ENCODE measurements at regions of chr6 and their contacts with region 1.

Region 1: GRCh38 chr6:125995972-125996580 is 9.7 kb downstream of the TRMT11 start:
- DNase-seq: peak; percentile 28
- ATAC-seq: peak; percentile 90
- H3K4me3 ChIP-seq: no peak overlapping the region
- H3K27ac ChIP-seq: no peak overlapping the region
- H3K4me1 ChIP-seq: no peaks in the 10 kb centered on the region
- H3K27me3 ChIP-seq: no peaks in the 10 kb centered on the region
- CTCF ChIP-seq: peak; percentile 94 to 96 (median 95)
- EP300 ChIP-seq: no peak
- POLR2A ChIP-seq: no peak
- RAD21 ChIP-seq: peak; percentile 87

Region 2: DNA sequence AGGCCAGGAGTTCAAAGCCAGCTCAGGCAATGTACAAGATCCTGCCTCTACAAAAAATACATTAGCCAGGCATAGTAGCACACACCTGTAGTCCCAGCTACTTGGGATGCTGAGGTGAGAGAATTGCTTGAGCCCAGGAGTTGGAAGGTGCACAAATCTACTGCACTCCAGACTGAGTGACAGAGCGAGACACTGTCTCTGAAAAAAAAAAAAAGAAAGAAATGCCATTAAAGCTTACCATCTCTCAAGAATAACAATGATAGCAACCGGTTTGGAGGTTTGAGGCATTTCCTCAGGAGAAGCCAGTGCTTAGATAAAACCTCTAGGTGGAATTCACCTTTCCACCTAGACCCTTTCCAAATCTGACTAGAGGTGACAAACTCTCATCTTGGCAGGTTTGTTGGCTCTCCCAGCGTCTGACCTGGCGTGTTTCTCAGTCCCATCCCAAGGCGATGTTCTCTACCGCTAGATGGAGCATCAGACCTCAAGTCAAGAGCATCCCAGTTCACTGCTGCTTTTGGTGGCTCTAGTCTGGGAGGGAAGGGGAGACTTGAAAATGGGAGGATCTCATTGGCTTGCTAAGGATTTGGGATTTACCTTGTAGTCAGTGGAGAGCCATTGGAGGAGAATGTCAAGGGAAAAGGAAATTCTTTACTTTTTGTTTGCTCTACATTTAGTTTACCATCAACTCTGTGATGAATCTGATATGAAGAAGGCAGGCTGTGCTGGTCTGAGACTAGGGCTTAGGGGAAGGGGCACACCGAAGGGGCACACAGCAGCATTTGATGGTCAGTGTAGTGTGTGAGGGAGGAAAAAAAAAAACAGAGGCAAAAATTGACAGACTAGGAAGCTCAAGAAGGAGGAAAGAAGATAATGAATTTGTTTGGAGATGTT is 137.4 kb before region 1 on chr6:
- CTCF ChIA-PET with region 1: no interaction called
- POLR2A ChIA-PET with region 1: no interaction called
- RAD21 ChIA-PET with region 1: no interaction called
- SMC1A ChIA-PET with region 1: interaction called, 11 read pairs
- in situ Hi-C with region 1: no loop called
- intact Hi-C with region 1: no loop called
- DNase-seq: no peak
- ATAC-seq: peak; percentile 91
- H3K4me3 ChIP-seq: no peak overlapping the region
- H3K27ac ChIP-seq: no peak overlapping the region
- H3K4me1 ChIP-seq: no peaks in the 10 kb centered on the region
- H3K27me3 ChIP-seq: no peaks in the 10 kb centered on the region
- CTCF ChIP-seq: peak; percentile 60 to 64 (median 62); a peak in 5 of 6 replicates
- EP300 ChIP-seq: no peak
- POLR2A ChIP-seq: no peak
- RAD21 ChIP-seq: peak; percentile 63

Region 3: GRCh38 chr6:125944434-125944816 is 51.7 kb before region 1 on chr6:
- CTCF ChIA-PET with region 1: no interaction called
- POLR2A ChIA-PET with region 1: no interaction called
- RAD21 ChIA-PET with region 1: no interaction called
- SMC1A ChIA-PET with region 1: no interaction called
- in situ Hi-C with region 1: no loop called
- intact Hi-C with region 1: no loop called
- DNase-seq: no peak
- ATAC-seq: no peak
- H3K4me3 ChIP-seq: no peak overlapping the region
- H3K27ac ChIP-seq: no peak overlapping the region
- H3K4me1 ChIP-seq: no peaks in the 10 kb centered on the region
- H3K27me3 ChIP-seq: no peaks in the 10 kb centered on the region
- CTCF ChIP-seq: no peak
- EP300 ChIP-seq: no peak
- POLR2A ChIP-seq: no peak
- RAD21 ChIP-seq: no peak

Region 4: DNA sequence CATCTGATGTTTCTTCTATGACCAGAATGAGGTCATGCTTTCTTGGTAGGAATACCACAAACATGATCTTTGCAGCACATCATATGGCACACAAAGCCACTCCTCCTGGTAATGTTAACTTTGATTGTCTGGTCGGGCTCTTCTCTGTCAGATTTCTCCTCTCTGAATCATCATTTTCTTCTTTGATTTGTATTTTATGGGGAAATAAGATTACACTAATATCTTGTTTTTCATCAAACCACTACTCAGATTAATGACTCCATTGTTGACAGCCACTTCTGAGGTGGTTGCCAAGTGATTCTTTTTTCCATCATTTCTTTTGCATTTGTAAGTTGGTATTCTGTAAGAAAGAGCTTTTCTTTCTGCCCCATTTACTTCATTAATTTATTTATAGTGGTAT is 19.8 kb after region 1 on chr6:
- CTCF ChIA-PET with region 1: interaction called, 32 read pairs
- POLR2A ChIA-PET with region 1: no interaction called
- RAD21 ChIA-PET with region 1: interaction called, 6 read pairs
- SMC1A ChIA-PET with region 1: interaction called, 9 read pairs
- in situ Hi-C with region 1: no loop called
- intact Hi-C with region 1: no loop called
- DNase-seq: no peak
- ATAC-seq: no peak
- H3K4me3 ChIP-seq: no peak overlapping the region
- H3K27ac ChIP-seq: no peak overlapping the region
- H3K4me1 ChIP-seq: no peaks in the 10 kb centered on the region
- H3K27me3 ChIP-seq: no peaks in the 10 kb centered on the region
- CTCF ChIP-seq: no peak
- EP300 ChIP-seq: no peak
- POLR2A ChIP-seq: no peak
- RAD21 ChIP-seq: no peak

Region 5: GRCh38 chr6:126176282-126176681 is 180.2 kb after region 1 on chr6:
- CTCF ChIA-PET with region 1: interaction called, 13 read pairs
- POLR2A ChIA-PET with region 1: no interaction called
- RAD21 ChIA-PET with region 1: no interaction called
- SMC1A ChIA-PET with region 1: interaction called, 4 read pairs
- in situ Hi-C with region 1: no loop called
- intact Hi-C with region 1: loop called (anchors 2 kb)
- DNase-seq: no peak
- ATAC-seq: peak; percentile 71
- H3K4me3 ChIP-seq: no peak overlapping the region
- H3K27ac ChIP-seq: no peak overlapping the region
- H3K4me1 ChIP-seq: no peaks in the 10 kb centered on the region
- H3K27me3 ChIP-seq: no peaks in the 10 kb centered on the region
- CTCF ChIP-seq: peak in 2 of 3 experiments; percentile 16 to 49; a peak in 2 of 6 replicates
- EP300 ChIP-seq: no peak
- POLR2A ChIP-seq: no peak
- RAD21 ChIP-seq: peak; percentile 74

Region 6: GRCh38 chr6:126657561-126658175 is 661.6 kb after region 1 on chr6:
- CTCF ChIA-PET with region 1: interaction called, 7 read pairs
- POLR2A ChIA-PET with region 1: no interaction called
- RAD21 ChIA-PET with region 1: interaction called, 3 read pairs
- SMC1A ChIA-PET with region 1: interaction called, 4 read pairs
- in situ Hi-C with region 1: loop called (anchors 25 kb)
- intact Hi-C with region 1: loop called (anchors 5 kb)
- DNase-seq: no peak
- ATAC-seq: peak; percentile 40; the same call in 1 of the 3 replicates
- H3K4me3 ChIP-seq: no peak overlapping the region
- H3K27ac ChIP-seq: no peak overlapping the region
- H3K4me1 ChIP-seq: no peaks in the 10 kb centered on the region
- H3K27me3 ChIP-seq: no peaks in the 10 kb centered on the region
- CTCF ChIP-seq: peak; percentile 38 to 55 (median 46); a peak in 4 of 6 replicates
- EP300 ChIP-seq: no peak
- POLR2A ChIP-seq: no peak
- RAD21 ChIP-seq: peak; percentile 66

Measured in GM12878 (cell line).